ENCODE measurements at regions of chr17 and their contacts with region 1.

Region 1: GRCh38 chr17:66275651-66276050 is 26.8 kb upstream of the PRKCA start:
- DNase-seq: peak; percentile 81
- H3K4me3 ChIP-seq: no peak overlapping the region
- H3K27ac ChIP-seq: no peak overlapping the region
- H3K4me1 ChIP-seq: no peaks in the 10 kb centered on the region
- H3K27me3 ChIP-seq: no peaks in the 10 kb centered on the region
- CTCF ChIP-seq: no peak

Region 2: GRCh38 chr17:66900126-66901010 is 624.7 kb after region 1 on chr17:
- CTCF ChIA-PET with region 1: no interaction called
- POLR2A ChIA-PET with region 1: interaction called, 12 read pairs
- intact Hi-C with region 1: no loop called
- DNase-seq: peak; percentile 38
- H3K4me3 ChIP-seq: no peak overlapping the region
- H3K27ac ChIP-seq: no peak overlapping the region
- H3K4me1 ChIP-seq: peaks cover 6% of the 10 kb centered on the region
- H3K27me3 ChIP-seq: no peaks in the 10 kb centered on the region
- CTCF ChIP-seq: peak; percentile 62

Measured in A673 (cell line).